IMR-90 (cell line): ENCODE measurements at regions of chr2 and their contacts with region 1.

Region 1: DNA sequence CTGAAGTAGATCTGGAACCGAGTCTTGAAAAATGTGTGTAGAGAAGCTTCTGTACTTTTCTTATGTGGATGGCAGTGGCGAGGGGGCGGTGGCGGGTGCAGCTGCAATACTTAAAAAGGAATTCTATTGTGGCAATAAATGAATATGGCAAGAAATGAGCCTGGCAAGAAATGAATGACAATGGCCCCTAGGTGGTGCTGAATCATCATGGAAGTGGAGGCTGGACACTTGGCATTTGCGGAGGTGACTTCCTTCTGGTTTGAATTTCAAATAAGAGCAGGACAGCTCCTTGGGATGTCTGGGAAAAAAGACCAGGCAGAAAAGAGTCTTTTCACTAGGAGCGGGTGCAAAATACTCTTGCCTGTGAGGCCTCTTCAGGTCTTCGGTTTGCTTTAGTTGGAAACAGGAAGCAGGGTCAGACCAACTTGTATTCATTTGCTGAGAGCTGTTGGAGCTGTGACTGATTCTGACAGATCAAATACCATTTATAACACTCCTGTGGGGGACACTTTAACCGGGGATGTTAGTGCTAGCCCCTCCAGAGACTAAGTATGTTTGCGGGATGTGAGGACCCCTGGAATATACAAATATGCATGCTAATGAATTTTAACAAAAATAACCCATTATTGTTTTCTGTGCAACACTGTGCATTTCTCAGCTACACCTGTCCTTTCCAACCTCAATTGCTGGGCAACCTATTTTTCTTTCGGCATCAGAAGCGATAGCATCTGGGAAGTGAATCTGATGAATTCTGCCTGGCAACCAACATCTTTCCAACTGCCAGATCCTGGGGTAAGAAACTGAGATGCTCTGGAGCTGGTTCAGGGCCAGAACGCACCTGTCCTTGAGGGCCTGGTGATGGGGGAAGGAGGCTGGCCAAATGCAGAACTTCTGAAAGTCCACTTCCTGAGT is 35.4 kb downstream of the FASTKD2 start:
- DNase-seq: peak; percentile 76
- ATAC-seq: peak; percentile 82
- H3K4me3 ChIP-seq: no peak overlapping the region
- H3K27ac ChIP-seq: no peak overlapping the region
- H3K4me1 ChIP-seq: no peaks in the 10 kb centered on the region
- H3K27me3 ChIP-seq: no peaks in the 10 kb centered on the region
- CTCF ChIP-seq: peak; percentile 76
- POLR2A ChIP-seq: no peak
- RAD21 ChIP-seq: peak; percentile 90

Region 2: DNA sequence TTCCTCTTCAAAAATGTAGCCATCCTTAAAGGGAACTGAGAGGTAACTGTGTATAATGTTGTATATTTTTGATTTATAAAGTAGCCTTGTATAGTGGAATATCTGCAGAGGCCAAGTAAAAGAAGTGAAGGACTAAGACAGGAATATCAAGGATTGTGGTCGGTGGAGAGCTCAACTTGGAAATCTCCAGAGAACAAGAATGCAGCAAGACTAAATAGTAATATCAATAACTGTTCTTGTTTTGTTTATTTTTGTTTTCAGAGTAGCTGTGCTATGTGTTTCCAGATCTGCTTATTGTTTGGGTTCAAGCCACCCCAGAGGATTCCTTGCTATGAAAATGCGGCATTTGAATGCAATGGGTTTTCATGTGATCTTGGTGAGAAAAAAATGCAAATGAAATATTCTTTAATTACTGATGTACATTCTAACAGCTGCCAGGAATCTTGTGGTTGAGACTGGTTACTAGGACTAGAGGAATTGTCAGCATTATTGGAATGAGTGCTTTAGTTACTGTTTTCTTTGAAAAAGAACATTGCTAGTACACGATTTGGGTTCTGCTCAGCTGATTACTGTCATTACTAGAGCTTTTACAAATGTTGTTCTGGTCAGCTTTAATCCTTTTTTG is 10.3 kb before region 1 on chr2:
- CTCF ChIA-PET with region 1: interaction called, 15 read pairs
- POLR2A ChIA-PET with region 1: no interaction called
- dilution Hi-C with region 1: no loop called
- in situ Hi-C with region 1: no loop called
- intact Hi-C with region 1: no loop called
- DNase-seq: peak; percentile 20
- ATAC-seq: peak; percentile 79
- H3K4me3 ChIP-seq: no peak overlapping the region
- H3K27ac ChIP-seq: no peak overlapping the region
- H3K4me1 ChIP-seq: peaks cover 1% of the 10 kb centered on the region; the same call in 1 of the 2 replicates
- H3K27me3 ChIP-seq: no peaks in the 10 kb centered on the region
- CTCF ChIP-seq: no peak
- POLR2A ChIP-seq: no peak
- RAD21 ChIP-seq: no peak

Region 3: GRCh38 chr2:207051385-207051965 is 250.7 kb after region 1 on chr2:
- CTCF ChIA-PET with region 1: no interaction called
- POLR2A ChIA-PET with region 1: no interaction called
- dilution Hi-C with region 1: no loop called
- in situ Hi-C with region 1: no loop called
- intact Hi-C with region 1: loop called (anchors 10 kb)
- DNase-seq: peak; percentile 65
- ATAC-seq: no peak
- H3K4me3 ChIP-seq: no peak overlapping the region
- H3K27ac ChIP-seq: no peak overlapping the region
- H3K4me1 ChIP-seq: peaks cover 5% of the 10 kb centered on the region
- H3K27me3 ChIP-seq: 0 out of 2 replicates have a peak, but pooled peaks cover 2% of the 10 kb centered on the region
- CTCF ChIP-seq: no peak
- POLR2A ChIP-seq: no peak
- RAD21 ChIP-seq: no peak

Region 4: DNA sequence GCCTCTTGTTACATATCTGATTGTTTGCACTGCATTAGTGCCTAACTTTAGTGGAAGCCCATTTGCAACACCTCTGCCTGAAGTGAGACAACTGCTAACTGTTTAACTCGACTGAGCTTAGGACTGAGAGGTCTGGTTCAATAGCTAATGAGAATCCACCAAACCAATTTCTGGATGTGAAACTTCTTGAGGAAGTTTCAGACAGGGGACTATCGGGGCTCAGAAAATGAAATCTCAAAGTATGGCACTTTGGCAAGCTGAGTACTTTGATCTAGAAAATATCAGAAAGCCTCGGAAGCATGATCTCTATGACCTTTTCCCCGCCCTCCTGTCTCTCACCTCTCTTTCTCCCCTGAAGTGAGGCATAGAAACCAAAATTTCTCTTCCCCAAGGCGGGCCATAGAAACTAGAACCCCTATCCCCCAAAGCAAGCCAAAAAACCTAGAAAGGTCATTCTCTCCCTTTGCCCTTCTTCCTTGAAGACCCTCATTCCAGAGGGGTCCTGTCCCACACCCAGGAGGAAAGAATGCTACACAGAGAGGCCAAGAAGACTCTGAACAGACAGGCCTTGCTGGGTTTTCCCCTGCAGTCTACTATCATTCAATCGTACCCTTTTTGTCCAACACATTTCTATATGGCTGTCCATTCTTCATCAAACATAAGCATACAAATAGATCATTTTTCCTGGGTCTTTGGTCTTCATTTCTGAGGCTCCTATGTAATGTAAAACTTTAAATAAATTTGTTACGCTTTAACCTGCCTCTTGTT is 659.4 kb after region 1 on chr2:
- CTCF ChIA-PET with region 1: no interaction called
- POLR2A ChIA-PET with region 1: no interaction called
- dilution Hi-C with region 1: no loop called
- in situ Hi-C with region 1: no loop called
- intact Hi-C with region 1: no loop called
- DNase-seq: no peak
- ATAC-seq: no peak
- H3K4me3 ChIP-seq: no peak overlapping the region
- H3K27ac ChIP-seq: no peak overlapping the region
- H3K4me1 ChIP-seq: no peaks in the 10 kb centered on the region
- H3K27me3 ChIP-seq: no peaks in the 10 kb centered on the region
- CTCF ChIP-seq: no peak
- POLR2A ChIP-seq: no peak
- RAD21 ChIP-seq: no peak